CD8-positive, alpha-beta T cell (primary cell): ENCODE measurements at regions of chr6 and their contacts with region 1.

Region 1: GRCh38 chr6:73879501-73880293 is 183.7 kb downstream of the CD109 start:
- DNase-seq: no peak
- ATAC-seq: no peak
- H3K4me3 ChIP-seq: no peak overlapping the region
- H3K4me3 Mint-ChIP-seq: no peak overlapping the region
- H3K27ac ChIP-seq: no peak overlapping the region
- H3K27ac Mint-ChIP-seq: no peak overlapping the region
- H3K4me1 ChIP-seq: no peaks in the 10 kb centered on the region
- H3K4me1 Mint-ChIP-seq: no peaks in the 10 kb centered on the region
- H3K27me3 ChIP-seq: no peaks in the 10 kb centered on the region
- H3K27me3 Mint-ChIP-seq: peaks cover 2% of the 10 kb centered on the region
- CTCF ChIP-seq: no peak

Region 2: DNA sequence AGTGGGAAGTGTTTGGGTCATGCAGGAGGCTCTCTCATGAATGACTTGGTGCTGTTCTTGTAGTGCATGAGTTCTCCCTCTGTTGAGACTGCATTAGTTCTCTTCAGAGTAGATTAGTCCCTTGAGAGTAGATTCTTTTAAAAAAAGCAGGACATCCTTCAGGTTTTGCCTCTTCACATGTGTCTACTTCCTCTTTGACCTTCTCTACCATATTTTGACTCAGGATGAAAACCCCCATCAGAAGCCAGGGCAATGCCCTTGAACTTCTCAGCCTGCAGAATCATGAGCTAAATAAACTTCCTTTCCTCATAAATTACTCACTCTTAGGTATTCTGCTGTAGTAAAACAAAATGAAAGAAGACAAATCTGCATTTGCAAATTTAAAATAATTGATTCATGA is 13.4 kb before region 1 on chr6:
- CTCF ChIA-PET with region 1: no interaction called
- POLR2A ChIA-PET with region 1: no interaction called
- intact Hi-C with region 1: no loop called
- DNase-seq: no peak
- ATAC-seq: no peak
- H3K4me3 ChIP-seq: no peak overlapping the region
- H3K4me3 Mint-ChIP-seq: no peak overlapping the region
- H3K27ac ChIP-seq: no peak overlapping the region
- H3K27ac Mint-ChIP-seq: no peak overlapping the region
- H3K4me1 ChIP-seq: no peaks in the 10 kb centered on the region
- H3K4me1 Mint-ChIP-seq: no peaks in the 10 kb centered on the region
- H3K27me3 ChIP-seq: no peaks in the 10 kb centered on the region
- H3K27me3 Mint-ChIP-seq: peaks cover 3% of the 10 kb centered on the region
- CTCF ChIP-seq: no peak

Region 3: GRCh38 chr6:73893696-73894095 is 14.0 kb after region 1 on chr6:
- CTCF ChIA-PET with region 1: interaction called, 3 read pairs
- POLR2A ChIA-PET with region 1: no interaction called
- intact Hi-C with region 1: loop called (anchors 1 kb)
- DNase-seq: no peak
- ATAC-seq: no peak
- H3K4me3 ChIP-seq: no peak overlapping the region
- H3K4me3 Mint-ChIP-seq: no peak overlapping the region
- H3K27ac ChIP-seq: no peak overlapping the region
- H3K27ac Mint-ChIP-seq: no peak overlapping the region
- H3K4me1 ChIP-seq: no peaks in the 10 kb centered on the region
- H3K4me1 Mint-ChIP-seq: no peaks in the 10 kb centered on the region
- H3K27me3 ChIP-seq: no peaks in the 10 kb centered on the region
- H3K27me3 Mint-ChIP-seq: no peaks in the 10 kb centered on the region
- CTCF ChIP-seq: no peak